ENCODE measurements at regions of chr1 and their contacts with region 1.

Region 1: DNA sequence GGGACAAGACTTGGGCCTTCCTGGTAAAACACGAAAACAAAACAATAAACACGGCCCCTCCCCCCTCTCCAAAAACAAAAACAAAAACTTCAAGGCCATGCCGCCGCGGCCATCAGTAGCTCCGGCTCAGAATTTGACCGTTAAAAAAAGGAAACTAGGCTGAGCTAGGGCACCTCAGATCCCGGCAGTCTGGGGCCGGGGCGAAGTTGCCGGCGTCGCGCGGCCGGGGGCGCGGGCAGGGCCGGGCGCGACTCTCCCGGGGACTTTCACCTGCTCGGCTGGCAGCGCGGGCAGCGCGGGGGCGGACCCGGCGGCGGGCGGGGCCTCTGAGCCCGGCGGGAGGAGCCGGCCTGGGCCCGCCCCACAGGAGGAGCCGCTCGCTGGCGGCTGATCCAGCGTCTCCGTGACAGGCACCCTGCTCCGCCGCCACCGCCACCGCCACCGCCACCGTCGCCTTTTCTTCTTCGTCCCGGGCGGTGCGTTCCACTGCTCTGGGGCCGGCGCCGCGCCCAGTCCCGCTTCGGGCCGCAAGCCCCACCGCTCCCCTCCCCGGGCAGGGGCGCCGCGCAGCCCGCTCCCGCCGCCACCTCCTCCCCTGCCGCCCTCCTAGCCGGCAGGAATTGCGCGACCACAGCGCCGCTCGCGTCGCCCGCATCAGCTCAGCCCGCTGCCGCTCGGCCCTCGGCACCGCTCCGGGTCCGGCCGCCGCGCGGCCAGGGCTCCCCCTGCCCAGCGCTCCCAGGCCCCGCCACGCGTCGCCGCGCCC is at the start of gene NOS1AP:
- DNase-seq: peak; percentile 96
- total RNA-seq, gene NOS1AP: 2.0 TPM

Region 2: DNA sequence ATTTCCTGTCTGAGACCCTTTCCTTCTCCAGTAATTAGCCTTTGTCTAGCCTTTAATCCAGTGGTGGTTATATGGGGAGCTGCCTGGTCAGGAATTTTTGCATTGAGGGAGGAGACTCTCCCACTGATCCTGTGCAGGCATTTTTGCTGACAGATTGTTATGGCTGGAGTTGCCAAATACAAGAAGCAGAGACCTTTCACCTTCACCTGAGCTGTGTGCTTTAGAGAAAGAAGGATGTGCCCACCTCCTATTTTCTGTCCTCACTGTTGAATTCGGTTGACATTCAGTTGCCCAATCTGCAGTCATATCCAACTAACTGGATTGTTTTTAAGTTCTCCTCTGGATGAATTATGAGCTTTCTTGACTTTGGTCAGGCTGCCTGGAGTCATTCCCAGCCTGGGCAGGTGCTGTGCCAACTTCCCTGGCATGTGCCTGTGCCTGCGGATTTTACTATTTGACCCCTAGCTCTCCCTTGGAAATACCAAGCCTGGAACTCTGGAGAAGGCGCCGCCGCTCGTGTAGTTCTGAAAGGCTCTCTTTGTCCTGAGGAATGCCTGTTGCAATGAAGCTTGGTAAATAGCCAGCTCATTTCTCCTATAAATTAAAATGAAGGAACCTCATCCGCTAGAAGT is 143.9 kb after region 1 on chr1:
- intact Hi-C with region 1: loop called (anchors 5 kb)
- DNase-seq: no peak